CD8-positive, alpha-beta T cell (primary cell): ENCODE measurements at regions of chr21 and their contacts with region 1.

Region 1: DNA sequence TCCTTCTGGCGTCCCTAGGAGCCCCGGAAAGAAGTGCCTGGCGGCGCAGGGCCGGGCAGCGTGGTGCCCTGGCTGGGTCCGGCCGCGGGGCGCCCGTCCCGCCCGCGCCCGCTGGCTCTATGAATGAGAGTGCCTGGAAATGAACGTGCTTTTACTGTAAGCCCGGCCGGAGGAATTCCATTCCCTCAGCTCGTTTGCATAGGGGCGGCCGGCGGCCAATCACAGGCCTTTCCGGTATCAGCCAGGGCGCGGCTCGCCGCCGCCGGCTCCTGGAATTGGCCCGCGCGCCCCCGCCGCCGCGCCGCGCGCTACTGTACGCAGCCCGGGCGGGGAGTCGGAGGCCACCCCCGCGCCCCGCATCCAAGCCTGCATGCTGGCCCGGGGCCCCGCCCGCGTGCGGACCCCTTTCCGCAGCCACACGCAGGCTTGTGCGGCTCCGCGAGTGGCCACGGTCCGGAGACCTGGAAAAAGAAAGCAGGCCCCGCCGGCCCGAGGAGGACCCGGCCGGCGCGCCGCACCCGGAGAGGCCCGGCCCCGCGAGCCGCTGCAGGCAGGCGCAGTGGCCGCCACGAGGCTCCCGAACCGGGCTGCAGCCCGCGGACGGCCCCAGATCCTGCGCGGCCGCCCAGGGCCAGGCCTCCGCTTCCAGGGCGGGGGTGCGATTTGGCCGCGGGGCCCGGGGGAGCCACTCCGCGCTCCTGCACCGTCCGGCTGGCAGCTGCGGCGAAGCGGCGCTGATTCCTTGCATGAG is 160.4 kb downstream of the RUNX1 start:
- DNase-seq: peak; percentile 33 to 88 (median 70)
- ATAC-seq: peak; percentile 28
- H3K4me3 ChIP-seq: peak overlapping the region; percentile 72 to 77
- H3K4me3 Mint-ChIP-seq: peak overlapping the region; percentile 90
- H3K27ac ChIP-seq: peak overlapping the region; percentile 58 to 78
- H3K27ac Mint-ChIP-seq: peak overlapping the region; percentile 94
- H3K4me1 ChIP-seq: peaks cover 34% of the 10 kb centered on the region
- H3K4me1 Mint-ChIP-seq: peaks cover 51% of the 10 kb centered on the region
- H3K27me3 ChIP-seq: no peaks in the 10 kb centered on the region
- H3K27me3 Mint-ChIP-seq: no peaks in the 10 kb centered on the region
- CTCF ChIP-seq: no peak

Region 2: DNA sequence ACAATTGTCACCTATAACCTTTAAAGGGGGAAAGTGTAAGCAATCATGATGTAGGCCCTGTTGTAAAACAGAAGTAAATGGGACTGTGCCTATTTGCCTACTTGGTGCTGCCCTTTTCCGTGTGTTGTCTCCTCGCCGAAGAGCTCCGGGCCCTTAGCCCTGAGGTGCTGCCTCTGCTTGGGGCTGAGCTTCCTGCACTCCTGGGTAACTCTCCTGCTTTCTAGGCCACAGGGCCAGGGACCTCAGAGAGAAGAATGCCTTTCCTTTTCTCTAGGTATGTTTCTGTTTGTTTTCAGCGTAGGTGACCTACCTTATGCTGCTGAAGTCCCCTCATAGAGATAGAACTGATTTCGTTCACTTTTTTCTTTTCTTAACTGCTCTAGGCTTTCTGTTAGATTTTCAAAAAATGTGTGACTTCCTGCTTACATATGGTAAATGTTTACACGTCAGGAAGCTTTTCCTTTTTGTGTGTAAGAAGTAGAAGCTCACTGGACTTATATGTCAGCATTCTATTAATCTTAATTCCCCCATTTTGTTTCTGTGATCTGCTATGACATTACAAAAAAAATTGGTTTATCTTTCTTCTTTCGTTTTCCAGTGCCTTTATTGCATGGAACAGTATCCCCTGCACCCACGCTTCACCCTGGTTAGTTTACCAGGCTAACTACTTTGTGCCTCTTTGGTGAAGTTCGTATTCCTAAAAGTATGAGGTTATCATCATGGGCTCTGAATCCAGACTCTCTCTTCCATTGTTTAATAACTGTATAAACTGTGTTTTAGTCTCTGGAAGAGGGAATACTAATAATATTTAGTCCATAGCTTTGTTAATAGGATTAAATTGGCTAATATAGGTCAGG is 1184.8 kb before region 1 on chr21:
- CTCF ChIA-PET with region 1: no interaction called
- POLR2A ChIA-PET with region 1: no interaction called
- intact Hi-C with region 1: no loop called
- DNase-seq: peak in 2 of 9 experiments; percentile 11 to 30
- ATAC-seq: no peak
- H3K4me3 ChIP-seq: no peak overlapping the region
- H3K4me3 Mint-ChIP-seq: peak overlapping the region; percentile 40
- H3K27ac ChIP-seq: peak overlapping the region; percentile 21 to 51
- H3K27ac Mint-ChIP-seq: peak overlapping the region; percentile 86
- H3K4me1 ChIP-seq: no peaks in the 10 kb centered on the region
- H3K4me1 Mint-ChIP-seq: peaks cover 6% of the 10 kb centered on the region
- H3K27me3 ChIP-seq: no peaks in the 10 kb centered on the region
- H3K27me3 Mint-ChIP-seq: no peaks in the 10 kb centered on the region
- CTCF ChIP-seq: no peak

Region 3: DNA sequence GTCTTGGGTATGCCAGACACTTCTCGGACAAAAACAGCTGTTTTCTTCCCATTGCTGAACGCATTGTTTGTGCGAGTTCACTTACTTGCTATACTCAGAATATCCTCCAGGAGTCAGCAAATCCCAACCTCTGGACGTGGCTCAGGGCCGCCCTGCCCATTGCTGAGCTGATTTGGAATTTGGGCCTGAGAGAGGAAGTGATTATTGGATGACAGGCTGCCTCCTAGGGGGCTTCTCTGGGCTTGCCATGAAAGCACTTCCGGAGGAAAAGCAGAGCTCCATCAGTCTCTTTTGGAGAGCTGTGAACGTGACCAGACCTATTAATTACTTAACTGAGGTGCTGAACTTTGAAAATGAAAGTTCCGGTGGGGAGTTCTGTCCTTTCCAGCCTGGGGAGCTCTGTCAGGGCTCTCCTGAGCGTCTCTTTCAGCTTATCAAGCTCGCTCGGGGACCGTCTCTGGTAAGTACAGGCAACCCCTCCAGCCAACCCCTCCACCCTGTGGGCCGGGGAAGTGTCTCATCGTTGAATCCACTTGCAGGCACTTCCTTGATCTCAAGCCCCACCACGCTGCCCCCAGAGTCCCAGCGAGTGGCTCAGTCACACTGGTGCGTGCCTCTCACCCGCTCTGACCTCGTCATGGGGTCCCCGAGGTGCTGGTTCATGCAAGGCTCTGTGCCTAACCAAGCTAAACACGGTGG is 143.0 kb before region 1 on chr21:
- CTCF ChIA-PET with region 1: interaction called, 8 read pairs
- POLR2A ChIA-PET with region 1: no interaction called
- intact Hi-C with region 1: loop called in 1 of 2 experiments (anchors 2 kb)
- DNase-seq: peak; percentile 16 to 71 (median 44)
- ATAC-seq: peak; percentile 80
- H3K4me3 ChIP-seq: peak overlapping the region in 1 of 2 experiments; percentile 13
- H3K4me3 Mint-ChIP-seq: peak overlapping the region; percentile 71
- H3K27ac ChIP-seq: no peak overlapping the region
- H3K27ac Mint-ChIP-seq: no peak overlapping the region
- H3K4me1 ChIP-seq: peaks cover 4% of the 10 kb centered on the region
- H3K4me1 Mint-ChIP-seq: peaks cover 4% of the 10 kb centered on the region
- H3K27me3 ChIP-seq: no peaks in the 10 kb centered on the region
- H3K27me3 Mint-ChIP-seq: peaks cover 4% of the 10 kb centered on the region
- CTCF ChIP-seq: peak; percentile 89

Region 4: GRCh38 chr21:34900376-34900775 is 11.6 kb after region 1 on chr21:
- CTCF ChIA-PET with region 1: interaction called, 28 read pairs
- POLR2A ChIA-PET with region 1: interaction called, 3 read pairs
- intact Hi-C with region 1: no loop called
- DNase-seq: no peak
- ATAC-seq: no peak
- H3K4me3 ChIP-seq: no peak overlapping the region
- H3K4me3 Mint-ChIP-seq: no peak overlapping the region
- H3K27ac ChIP-seq: no peak overlapping the region
- H3K27ac Mint-ChIP-seq: peak overlapping the region; percentile 22
- H3K4me1 ChIP-seq: peaks cover 3% of the 10 kb centered on the region
- H3K4me1 Mint-ChIP-seq: peaks cover 32% of the 10 kb centered on the region
- H3K27me3 ChIP-seq: no peaks in the 10 kb centered on the region
- H3K27me3 Mint-ChIP-seq: no peaks in the 10 kb centered on the region
- CTCF ChIP-seq: no peak

Region 5: DNA sequence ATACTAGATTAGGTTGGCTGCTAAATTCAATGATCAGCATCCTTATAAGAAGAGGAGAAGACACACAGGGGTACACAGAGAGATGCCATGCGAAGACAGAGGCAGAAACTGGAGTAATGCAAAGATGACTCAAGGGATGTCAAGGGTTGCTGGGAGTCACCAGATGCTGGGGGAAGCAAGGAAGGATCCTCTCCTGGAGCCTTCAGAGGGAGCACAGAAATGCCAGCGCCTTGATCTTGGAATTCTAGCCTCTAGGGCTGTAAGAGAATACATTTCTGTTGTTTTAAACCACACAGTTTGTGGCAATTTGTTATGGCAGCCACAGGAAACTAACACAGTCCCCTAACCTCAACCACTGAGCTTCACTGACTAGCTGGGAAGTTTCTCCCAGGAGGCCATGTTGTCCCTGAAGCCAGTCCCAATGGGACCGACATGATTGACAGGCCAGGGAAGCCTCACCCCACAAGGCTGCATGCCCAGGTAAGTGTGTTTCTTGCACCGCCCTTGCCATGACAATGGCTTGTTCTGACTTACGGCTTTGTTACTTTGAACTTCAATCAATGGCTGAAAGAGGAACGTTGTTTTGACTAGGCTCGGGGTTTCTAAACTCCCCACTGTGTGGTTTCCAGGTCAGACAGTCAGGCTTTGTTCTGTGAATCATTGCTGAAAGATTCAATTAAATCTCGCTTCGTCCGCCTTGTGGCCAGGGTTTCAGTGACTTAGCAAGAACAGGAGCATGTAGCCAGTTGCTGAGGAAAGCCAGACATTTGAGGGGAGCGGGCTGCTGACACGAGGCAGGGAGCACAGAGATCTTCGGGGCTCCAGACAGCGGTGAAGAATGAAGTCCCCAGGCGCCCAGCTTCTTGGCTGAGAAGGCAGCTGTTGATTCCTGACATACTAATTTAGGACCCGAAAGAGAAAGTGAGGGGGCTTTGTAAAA is 98.1 kb after region 1 on chr21:
- CTCF ChIA-PET with region 1: interaction called, 9 read pairs
- POLR2A ChIA-PET with region 1: interaction called, 9 read pairs
- intact Hi-C with region 1: loop called (anchors 1 to 5 kb)
- DNase-seq: peak; percentile 19 to 81 (median 68)
- ATAC-seq: peak; percentile 72
- H3K4me3 ChIP-seq: peak overlapping the region; percentile 3 to 7
- H3K4me3 Mint-ChIP-seq: peak overlapping the region; percentile 63
- H3K27ac ChIP-seq: peak overlapping the region; percentile 15 to 71
- H3K27ac Mint-ChIP-seq: peak overlapping the region; percentile 95
- H3K4me1 ChIP-seq: peaks cover 89% of the 10 kb centered on the region
- H3K4me1 Mint-ChIP-seq: peaks cover 93% of the 10 kb centered on the region
- H3K27me3 ChIP-seq: no peaks in the 10 kb centered on the region
- H3K27me3 Mint-ChIP-seq: no peaks in the 10 kb centered on the region
- CTCF ChIP-seq: no peak

Region 6: DNA sequence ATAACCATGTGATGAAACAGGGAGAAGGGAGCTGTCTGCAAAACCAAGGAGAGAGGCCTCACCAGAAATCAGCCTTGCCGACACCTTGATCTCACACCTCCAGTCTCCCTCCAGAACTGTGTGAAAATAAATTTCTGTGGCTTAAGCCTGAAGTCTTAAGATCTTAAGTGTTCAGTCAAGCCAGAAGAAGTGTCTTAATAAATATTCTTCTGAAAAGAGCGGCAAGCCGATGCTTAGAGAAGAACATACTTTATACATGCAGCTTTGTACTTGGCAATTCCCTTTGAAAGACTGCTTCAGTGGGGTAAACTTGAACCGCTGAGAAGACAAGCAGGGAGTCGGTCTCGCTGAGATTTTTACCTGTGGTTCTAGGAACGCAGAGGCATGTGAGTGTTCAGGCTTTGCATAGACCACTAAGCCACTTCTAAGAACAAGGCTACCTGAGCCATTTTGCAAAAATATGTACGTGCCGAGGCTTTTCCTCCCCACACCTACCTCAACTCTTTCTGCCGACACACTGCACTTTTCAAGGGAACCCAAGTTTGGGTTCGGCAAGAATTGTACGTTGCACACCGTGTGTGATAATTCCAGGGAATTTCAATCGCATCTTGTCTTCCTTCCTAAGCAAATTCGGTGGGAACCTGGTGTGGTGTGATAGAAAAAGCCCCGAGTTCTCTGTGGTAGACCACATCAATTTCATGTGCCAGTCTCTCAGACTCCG is 157.0 kb after region 1 on chr21:
- CTCF ChIA-PET with region 1: interaction called, 81 read pairs
- POLR2A ChIA-PET with region 1: interaction called, 74 read pairs
- intact Hi-C with region 1: loop called (anchors 1 kb)
- DNase-seq: peak in 7 of 9 experiments; percentile 42 to 91 (median 70)
- ATAC-seq: peak; percentile 31
- H3K4me3 ChIP-seq: peak overlapping the region; percentile 75 to 78
- H3K4me3 Mint-ChIP-seq: peak overlapping the region; percentile 95
- H3K27ac ChIP-seq: peak overlapping the region; percentile 76 to 79
- H3K27ac Mint-ChIP-seq: peak overlapping the region; percentile 97
- H3K4me1 ChIP-seq: peaks cover 69% of the 10 kb centered on the region
- H3K4me1 Mint-ChIP-seq: peaks cover 81% of the 10 kb centered on the region
- H3K27me3 ChIP-seq: no peaks in the 10 kb centered on the region
- H3K27me3 Mint-ChIP-seq: no peaks in the 10 kb centered on the region
- CTCF ChIP-seq: no peak

Region 7: DNA sequence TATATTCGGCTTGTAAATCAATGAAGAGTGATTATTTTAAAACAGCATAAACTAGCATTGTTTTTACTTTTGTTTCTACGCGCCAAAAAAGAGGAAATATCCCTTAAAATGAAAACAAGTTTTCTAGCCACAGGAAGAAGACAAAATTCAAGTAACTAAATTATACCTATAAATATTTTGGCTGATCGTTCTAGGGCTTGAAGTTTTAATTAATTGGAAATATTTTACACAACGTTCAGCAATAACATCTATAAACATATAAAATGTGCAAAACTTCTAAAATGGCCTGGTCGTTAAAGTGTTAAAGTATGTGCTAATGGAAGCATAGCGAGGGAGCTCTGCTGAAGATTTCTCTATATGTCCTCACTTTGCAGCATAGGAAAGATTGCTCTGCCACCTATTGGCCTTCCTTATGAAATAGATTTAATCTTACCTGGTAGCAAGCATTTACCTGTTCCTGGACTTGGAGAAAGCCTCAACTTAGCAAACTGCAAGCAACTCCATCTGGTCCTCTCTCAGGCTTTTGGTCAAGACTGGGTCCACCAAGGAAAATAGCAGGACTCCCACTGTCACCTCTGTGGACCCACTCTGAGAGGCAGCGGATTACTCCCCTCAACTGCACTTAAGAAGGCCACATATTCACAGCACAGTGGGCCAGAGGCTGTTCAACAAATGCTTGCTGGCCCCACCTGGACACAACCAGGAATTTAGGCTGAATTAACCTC is 511.7 kb after region 1 on chr21:
- CTCF ChIA-PET with region 1: interaction called, 41 read pairs
- POLR2A ChIA-PET with region 1: interaction called, 5 read pairs
- intact Hi-C with region 1: loop called (anchors 1 kb)
- DNase-seq: peak in 8 of 9 experiments; percentile 2 to 81 (median 34)
- ATAC-seq: peak; percentile 89
- H3K4me3 ChIP-seq: no peak overlapping the region
- H3K4me3 Mint-ChIP-seq: no peak overlapping the region
- H3K27ac ChIP-seq: no peak overlapping the region
- H3K27ac Mint-ChIP-seq: no peak overlapping the region
- H3K4me1 ChIP-seq: no peaks in the 10 kb centered on the region
- H3K4me1 Mint-ChIP-seq: no peaks in the 10 kb centered on the region
- H3K27me3 ChIP-seq: no peaks in the 10 kb centered on the region
- H3K27me3 Mint-ChIP-seq: no peaks in the 10 kb centered on the region
- CTCF ChIP-seq: peak; percentile 67